Activated CD4-positive, alpha-beta memory T cell treated with anti-CD3 and anti-CD28 coated beads, Interleukin-2, amount 10 ng/mL, durations not matched to agents 7 days and 5 days (primary cell): ENCODE measurements at regions of chr4 and their contacts with region 1.

Region 1: DNA sequence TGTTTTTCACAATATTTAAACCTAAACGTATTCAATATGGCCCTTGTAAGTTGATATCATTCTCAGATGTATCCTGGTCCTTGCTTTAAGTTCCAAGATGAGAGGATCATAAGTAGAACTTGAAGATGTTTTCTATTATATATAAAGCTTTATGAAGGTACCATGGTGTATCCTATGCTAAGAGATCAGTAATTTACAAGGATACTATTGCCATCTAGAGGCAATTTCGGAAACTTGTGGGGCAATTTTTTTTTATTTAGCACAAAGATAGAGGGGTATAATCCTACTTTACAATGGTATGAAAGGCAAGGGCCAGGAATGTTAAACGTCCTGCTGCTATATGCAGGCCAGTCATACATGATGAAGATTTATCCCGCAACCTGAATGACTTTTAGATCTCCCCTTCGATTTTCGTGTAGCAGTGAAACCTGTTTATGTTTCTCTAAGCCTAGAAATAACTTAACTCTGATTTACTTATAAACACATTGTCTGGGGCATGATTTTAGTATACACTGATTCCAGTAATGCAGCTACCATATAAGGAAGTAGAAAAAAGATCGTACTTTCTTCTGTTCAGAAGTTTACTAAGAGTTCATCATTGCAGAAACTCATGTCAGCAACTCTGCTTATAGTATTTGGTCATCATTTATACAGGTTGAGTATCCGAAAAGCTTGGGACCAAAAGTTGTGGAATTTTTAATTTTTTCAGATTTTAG is 2.6 kb downstream of the SLC25A31 start:
- DNase-seq: no peak
- H3K4me3 Mint-ChIP-seq: no peak overlapping the region
- H3K27ac Mint-ChIP-seq: no peak overlapping the region
- H3K4me1 Mint-ChIP-seq: no peaks in the 10 kb centered on the region
- H3K27me3 Mint-ChIP-seq: peaks cover 4% of the 10 kb centered on the region

Region 2: GRCh38 chr4:127606823-127607222 is 125.9 kb before region 1 on chr4:
- CTCF ChIA-PET with region 1: interaction called, 12 read pairs
- POLR2A ChIA-PET with region 1: no interaction called
- DNase-seq: no peak
- H3K4me3 Mint-ChIP-seq: no peak overlapping the region
- H3K27ac Mint-ChIP-seq: no peak overlapping the region
- H3K4me1 Mint-ChIP-seq: no peaks in the 10 kb centered on the region
- H3K27me3 Mint-ChIP-seq: peaks cover 10% of the 10 kb centered on the region